GM10248 (cell line): ENCODE measurements at regions of chr10 and their contacts with region 1.

Region 1: GRCh38 chr10:50577681-50578350 is 45.9 kb downstream of the SGMS1 start:
- DNase-seq: no peak
- CTCF ChIP-seq: no peak

Region 2: DNA sequence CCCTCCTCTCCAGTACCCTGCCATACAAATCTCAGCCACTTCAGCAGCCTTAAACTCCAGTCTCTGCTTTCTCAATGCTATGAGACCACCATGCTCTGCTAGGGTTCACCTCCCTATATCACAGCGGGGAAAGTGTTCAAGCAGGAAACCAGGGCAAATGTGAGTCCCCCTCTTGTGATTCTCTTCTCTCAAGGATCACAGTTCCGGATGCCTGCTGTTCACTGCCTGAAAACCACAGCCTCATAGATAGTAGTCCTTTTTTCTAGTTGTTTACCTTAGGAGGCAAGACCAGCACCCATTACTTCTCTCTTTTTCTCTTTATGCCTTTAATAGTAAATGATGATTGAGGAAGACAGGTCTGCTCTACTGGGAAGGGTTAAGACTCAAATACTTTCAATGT is 54.9 kb before region 1 on chr10:
- CTCF ChIA-PET with region 1: no interaction called
- POLR2A ChIA-PET with region 1: no interaction called
- DNase-seq: no peak
- CTCF ChIP-seq: no peak

Region 3: GRCh38 chr10:50567384-50567783 is 10.4 kb before region 1 on chr10:
- CTCF ChIA-PET with region 1: interaction called, 10 read pairs
- POLR2A ChIA-PET with region 1: no interaction called
- DNase-seq: no peak
- CTCF ChIP-seq: no peak

Region 4: GRCh38 chr10:50590935-50591334 is 13.1 kb after region 1 on chr10:
- CTCF ChIA-PET with region 1: interaction called, 24 read pairs
- POLR2A ChIA-PET with region 1: no interaction called
- DNase-seq: no peak
- CTCF ChIP-seq: no peak

Region 5: DNA sequence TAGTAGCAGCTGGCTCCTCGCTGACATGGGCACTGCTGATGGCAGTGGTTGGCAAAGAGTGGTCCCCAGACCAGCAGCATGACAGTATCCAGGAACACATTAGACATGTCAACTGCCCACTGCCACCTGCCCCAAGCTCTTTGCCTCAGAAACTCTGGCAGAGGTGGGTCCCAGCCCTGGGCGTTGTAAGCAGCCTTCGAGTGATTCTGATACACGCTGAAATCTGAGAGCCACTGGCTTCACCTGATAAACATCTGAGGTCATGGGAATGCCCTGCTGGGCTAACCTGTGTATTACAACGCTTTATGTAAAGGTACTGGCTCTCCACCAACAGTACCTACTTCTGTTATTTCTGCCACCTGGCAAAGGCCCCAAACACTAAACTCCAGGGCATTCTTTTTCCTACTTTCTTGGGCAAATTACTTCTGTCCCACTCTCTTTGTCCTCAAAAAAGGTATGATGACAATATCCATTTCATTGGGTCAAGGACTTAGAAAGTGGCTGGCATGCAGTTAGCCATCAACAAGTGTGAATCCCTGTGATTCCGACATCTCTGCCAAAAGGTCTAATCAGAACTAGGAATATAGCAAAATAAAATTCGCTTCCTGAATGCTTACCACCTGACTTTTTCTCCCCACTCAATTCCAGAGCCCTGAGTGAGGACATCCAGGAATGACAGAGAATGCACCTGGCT is 36.8 kb after region 1 on chr10:
- CTCF ChIA-PET with region 1: interaction called, 13 read pairs
- POLR2A ChIA-PET with region 1: no interaction called
- DNase-seq: peak; percentile 35
- CTCF ChIP-seq: no peak

Region 6: GRCh38 chr10:50621968-50622705 is 44.3 kb after region 1 on chr10:
- CTCF ChIA-PET with region 1: interaction called, 11 read pairs
- POLR2A ChIA-PET with region 1: interaction called, 3 read pairs
- DNase-seq: peak; percentile 71
- CTCF ChIP-seq: peak; percentile 34